AG04449 (cell line): ENCODE measurements at regions of chrX and their contacts with region 1.

Region 1: DNA sequence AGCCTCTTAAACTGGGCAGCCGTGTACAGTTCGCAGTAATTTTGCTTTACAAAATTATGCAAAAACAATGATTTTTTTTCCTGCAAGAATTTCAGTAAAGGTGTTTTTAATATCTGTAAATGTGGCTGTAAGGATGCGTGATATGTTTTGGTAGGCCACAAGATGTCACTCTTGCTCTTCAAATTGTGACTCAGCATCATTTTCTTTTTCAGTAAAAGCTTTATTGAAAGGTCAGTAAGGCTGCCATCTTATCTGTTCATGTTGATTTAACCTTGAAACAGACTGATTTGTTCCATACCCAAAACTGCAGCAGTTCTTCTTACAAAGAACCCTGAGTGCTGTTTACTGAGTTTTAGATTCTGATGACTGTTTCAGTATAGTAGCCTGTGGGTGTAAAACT is 39.9 kb downstream of the TXLNG start:
- DNase-seq: no peak
- H3K4me3 ChIP-seq: no peak overlapping the region
- CTCF ChIP-seq: peak; percentile 30

Region 2: DNA sequence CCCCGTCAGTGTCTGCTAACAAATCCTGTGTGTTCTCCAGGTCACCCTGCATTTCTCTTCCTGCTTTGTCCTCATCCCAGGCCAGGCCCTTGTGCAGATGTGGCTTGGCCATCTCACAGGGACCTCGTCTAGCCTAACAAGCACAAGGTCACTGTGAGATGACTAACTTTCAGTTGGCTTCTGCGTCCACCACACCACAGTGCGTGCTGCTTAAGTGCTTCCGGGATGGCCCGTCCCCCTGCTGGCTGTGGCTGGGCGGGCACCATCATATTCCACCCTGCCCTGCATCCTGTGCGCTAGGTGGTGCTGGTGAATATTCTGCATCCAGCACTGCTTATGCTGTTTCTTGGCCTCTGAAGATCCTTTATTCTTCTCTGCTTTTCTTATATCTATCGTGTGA is 10.2 kb after region 1 on chrX:
- CTCF ChIA-PET with region 1: interaction called, 24 read pairs
- POLR2A ChIA-PET with region 1: no interaction called
- DNase-seq: no peak
- H3K4me3 ChIP-seq: no peak overlapping the region
- CTCF ChIP-seq: peak; percentile 33

Region 3: DNA sequence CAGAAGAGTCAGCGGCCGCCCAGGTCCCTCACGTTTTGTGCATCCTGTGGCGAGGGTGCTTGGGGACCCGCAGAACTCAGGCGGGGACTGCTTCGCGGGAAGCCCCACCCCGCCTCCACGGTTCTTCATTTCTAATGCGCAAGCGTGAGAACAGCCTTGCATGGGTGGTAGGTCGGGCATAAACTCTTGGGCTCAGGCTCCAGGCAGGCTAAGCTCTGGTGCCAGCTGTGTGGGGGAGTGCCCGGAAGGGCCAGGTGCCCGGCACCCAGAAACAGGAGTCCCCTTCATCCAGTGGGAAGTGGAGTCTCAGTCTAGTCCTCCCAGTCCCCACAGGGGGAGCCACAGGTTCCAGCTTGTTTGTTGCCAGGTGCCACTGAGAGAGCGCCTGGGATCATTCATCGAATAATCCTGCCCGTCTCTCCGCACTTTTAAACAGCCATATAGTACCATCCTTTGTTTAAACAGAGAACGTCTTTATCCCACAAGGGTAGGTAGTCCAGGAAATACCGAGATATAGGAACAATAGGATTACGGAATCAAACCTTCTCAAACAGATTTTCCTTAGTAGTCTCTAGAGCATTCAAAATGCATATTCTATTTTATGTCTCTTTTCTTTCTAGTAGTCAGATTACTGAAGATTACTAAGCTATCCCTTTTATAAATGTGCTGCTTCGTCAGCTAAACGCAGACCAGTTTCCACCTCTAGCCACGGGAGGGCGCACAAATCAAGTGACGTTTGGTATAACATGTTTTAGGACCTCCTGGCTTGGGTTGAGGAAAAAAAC is 56.7 kb after region 1 on chrX:
- CTCF ChIA-PET with region 1: interaction called, 42 read pairs
- POLR2A ChIA-PET with region 1: no interaction called
- DNase-seq: no peak
- H3K4me3 ChIP-seq: peak overlapping the region; percentile 46
- CTCF ChIP-seq: peak; percentile 64

Region 4: DNA sequence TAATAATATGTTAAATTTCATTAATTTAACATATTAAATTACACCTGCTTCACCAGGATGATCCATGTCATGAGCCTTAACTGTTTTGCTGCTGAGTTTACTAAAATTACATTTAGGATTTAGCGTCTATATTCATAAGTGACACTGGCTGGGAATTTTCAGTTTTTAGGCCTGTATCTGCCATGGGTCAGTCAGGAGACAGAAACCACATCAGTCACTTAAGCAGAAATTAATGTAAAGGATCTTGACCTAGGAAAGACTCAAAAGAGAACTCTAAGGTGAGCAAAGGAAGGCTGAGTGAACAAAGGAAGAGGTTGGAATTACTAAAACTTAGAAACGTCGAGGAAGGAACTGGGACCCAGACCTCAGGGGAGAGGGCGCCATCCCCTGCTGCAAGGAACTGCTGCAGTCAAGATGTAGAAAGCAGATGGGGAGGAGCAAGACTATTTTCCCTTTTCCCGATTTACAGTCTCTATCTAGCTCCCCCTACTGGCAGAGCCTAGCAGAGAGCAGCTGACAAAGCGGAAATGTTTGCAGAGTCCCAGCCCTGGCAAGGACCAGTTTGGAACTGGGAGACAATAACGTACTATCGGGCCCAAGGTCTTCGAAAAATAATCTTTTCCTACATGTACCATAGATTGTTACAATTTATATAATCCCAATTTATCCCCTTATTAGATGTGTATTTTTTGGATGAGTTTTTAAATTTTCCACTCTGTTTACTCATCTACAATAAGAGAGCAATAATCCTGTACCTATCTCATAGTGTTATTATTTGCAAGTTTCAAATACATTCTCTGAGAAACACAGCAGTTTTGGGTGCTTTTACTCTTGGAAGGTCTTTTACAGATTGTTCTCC is 66.5 kb after region 1 on chrX:
- CTCF ChIA-PET with region 1: interaction called, 15 read pairs
- POLR2A ChIA-PET with region 1: no interaction called
- DNase-seq: no peak
- H3K4me3 ChIP-seq: no peak overlapping the region
- CTCF ChIP-seq: peak; percentile 78

Region 5: GRCh38 chrX:17046478-17047097 is 220.4 kb after region 1 on chrX:
- CTCF ChIA-PET with region 1: interaction called, 127 read pairs
- POLR2A ChIA-PET with region 1: no interaction called
- DNase-seq: no peak
- H3K4me3 ChIP-seq: no peak overlapping the region
- CTCF ChIP-seq: peak; percentile 57

Region 6: DNA sequence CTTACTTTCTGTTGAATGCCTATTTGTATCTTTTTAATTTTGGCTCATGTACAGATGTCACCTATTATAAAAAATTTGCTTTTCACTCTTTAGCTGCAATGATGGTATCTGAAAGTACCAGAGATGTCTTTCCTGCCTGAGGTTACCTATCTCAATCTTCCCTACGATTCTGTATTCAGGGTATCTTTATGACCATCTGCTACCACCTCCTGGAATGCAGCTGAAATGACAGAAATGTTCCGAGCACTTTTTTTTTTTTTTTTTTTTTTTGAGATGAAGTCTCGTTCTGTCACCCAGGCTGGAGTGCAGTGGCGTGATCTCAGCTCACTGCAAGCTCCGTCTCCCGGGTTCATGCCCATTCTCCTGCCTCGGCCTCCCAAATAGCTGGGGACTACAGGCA is 256.6 kb after region 1 on chrX:
- CTCF ChIA-PET with region 1: interaction called, 11 read pairs
- POLR2A ChIA-PET with region 1: no interaction called
- DNase-seq: no peak
- H3K4me3 ChIP-seq: no peak overlapping the region
- CTCF ChIP-seq: no peak